ENCODE measurements at regions of chr17 and their contacts with region 1.

Region 1: DNA sequence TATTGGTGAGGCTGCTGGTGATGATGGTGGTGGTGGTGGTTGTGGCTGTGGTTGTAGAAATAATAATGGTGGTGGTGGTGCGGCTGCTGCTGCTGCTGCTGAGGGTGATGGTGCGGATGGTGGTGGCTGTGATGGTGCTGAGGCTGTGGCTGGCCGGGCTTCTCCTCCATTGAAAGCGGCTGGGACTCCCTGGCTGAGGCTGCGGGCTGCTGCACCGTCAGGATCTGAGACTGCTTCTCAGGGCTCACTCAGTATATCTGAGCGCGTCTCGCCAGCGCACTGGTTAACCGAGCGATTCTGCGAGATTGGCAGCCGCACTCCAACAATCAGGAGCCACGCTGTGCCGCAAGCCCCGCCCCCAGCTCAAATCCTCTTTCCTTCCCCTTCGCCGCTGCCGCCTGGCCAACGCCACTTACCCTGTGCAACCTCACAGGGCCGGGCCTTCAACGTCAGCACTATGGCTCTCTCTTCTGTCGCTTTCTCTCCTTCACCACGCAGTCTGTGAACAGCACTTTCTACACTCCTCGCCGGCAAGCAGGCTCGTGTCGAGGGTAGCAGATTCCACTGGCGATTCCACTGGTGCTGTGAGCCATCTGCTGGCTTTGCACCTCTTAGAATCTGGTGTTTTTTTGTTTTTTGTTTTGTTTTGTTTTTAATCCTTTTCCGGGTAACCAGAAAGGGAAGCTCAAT is at the start of gene NUFIP2:
- DNase-seq: peak; percentile 95
- ATAC-seq: peak; percentile 94
- H3K4me3 ChIP-seq: peak within 1 kb of the TSS; percentile 89
- H3K27ac ChIP-seq: peak within 1 kb of the TSS; percentile 97
- H3K4me1 ChIP-seq: peaks cover 2% of the 10 kb centered on the region; the same call in 1 of the 2 replicates
- H3K27me3 ChIP-seq: no peaks in the 10 kb centered on the region
- CTCF ChIP-seq: no peak
- EP300 ChIP-seq: peak in 1 of 2 experiments; percentile 86; a peak in 2 of 4 replicates
- POLR2A ChIP-seq: peak; percentile 98
- RAD21 ChIP-seq: peak; percentile 3; the same call in 1 of the 2 replicates
- polyA plus RNA-seq, gene NUFIP2: 4.3 to 5.2 TPM

Region 2: DNA sequence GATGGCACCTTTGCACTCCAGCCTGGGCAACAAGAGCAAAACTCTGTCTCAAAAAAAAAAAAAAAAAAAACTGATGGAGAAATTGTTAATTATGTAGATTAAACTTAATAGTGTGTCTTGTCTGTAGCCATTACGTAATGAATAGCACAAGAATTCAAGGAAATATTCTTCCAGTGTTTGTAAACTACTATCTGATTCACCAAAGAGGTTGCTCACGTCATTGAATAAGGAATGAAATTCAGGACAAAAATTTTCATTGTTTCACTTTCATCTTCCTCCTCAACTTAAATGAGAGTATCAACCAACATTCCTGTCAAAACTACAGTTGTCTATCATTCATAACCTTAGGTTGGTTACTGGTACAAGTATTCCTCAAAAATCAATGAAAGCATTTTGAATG is 83.2 kb before region 1 on chr17:
- CTCF ChIA-PET with region 1: no interaction called
- POLR2A ChIA-PET with region 1: no interaction called
- RAD21 ChIA-PET with region 1: no interaction called
- SMC1A ChIA-PET with region 1: no interaction called
- in situ Hi-C with region 1: no loop called
- intact Hi-C with region 1: no loop called
- DNase-seq: no peak
- ATAC-seq: no peak
- H3K4me3 ChIP-seq: no peak overlapping the region
- H3K27ac ChIP-seq: no peak overlapping the region
- H3K4me1 ChIP-seq: no peaks in the 10 kb centered on the region
- H3K27me3 ChIP-seq: no peaks in the 10 kb centered on the region
- CTCF ChIP-seq: no peak
- EP300 ChIP-seq: no peak
- POLR2A ChIP-seq: no peak
- RAD21 ChIP-seq: no peak

Region 3: DNA sequence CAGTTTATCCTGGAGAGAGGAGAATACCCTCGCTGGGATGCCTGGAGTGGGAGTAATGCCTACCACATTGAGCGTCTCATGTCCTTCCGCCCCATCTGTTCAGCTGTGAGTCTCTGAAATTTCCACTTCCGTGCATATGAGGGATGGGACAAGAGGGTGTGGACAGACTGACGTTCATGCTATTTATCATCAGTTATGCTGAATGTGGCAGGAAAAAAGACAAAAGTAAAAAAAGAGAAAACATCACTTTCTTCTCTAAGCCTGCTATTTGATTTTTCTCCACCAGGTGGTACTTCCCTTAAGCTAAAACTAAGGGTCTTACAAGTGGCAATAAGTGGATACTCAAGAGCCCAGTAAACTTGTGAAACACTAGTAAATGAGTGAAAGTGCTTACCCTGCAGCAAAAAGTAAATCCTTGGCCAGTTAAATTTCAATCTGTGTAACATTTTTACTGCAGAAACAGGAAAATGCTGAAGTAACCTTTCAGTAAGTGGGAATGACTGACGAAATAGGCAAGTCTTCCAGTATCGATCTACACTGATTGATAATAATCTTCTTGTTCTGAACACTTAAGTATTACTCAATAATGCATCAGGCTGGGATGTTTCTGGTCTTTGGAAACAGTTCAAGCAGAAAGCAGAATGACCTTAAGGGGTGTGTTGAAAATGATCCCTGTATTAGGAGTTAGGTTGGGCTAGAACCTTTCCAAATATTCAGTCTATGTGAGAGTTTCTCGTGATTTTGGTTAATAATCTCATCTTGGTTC is 41.8 kb before region 1 on chr17:
- CTCF ChIA-PET with region 1: interaction called, 36 read pairs
- POLR2A ChIA-PET with region 1: interaction called, 8 read pairs
- RAD21 ChIA-PET with region 1: interaction called, 4 read pairs
- SMC1A ChIA-PET with region 1: interaction called, 12 read pairs
- in situ Hi-C with region 1: no loop called
- intact Hi-C with region 1: no loop called
- DNase-seq: no peak
- ATAC-seq: peak; percentile 53
- H3K4me3 ChIP-seq: no peak overlapping the region
- H3K27ac ChIP-seq: no peak overlapping the region
- H3K4me1 ChIP-seq: no peaks in the 10 kb centered on the region
- H3K27me3 ChIP-seq: no peaks in the 10 kb centered on the region
- CTCF ChIP-seq: peak; percentile 19 to 47 (median 46); a peak in 4 of 6 replicates
- EP300 ChIP-seq: no peak
- POLR2A ChIP-seq: no peak
- RAD21 ChIP-seq: peak; percentile 30; the same call in 1 of the 2 replicates

Region 4: GRCh38 chr17:29273924-29274323 is 20.1 kb before region 1 on chr17:
- CTCF ChIA-PET with region 1: interaction called, 21 read pairs
- POLR2A ChIA-PET with region 1: no interaction called
- RAD21 ChIA-PET with region 1: interaction called, 3 read pairs
- SMC1A ChIA-PET with region 1: interaction called, 5 read pairs
- in situ Hi-C with region 1: no loop called
- intact Hi-C with region 1: no loop called
- DNase-seq: no peak
- ATAC-seq: no peak
- H3K4me3 ChIP-seq: no peak overlapping the region
- H3K27ac ChIP-seq: no peak overlapping the region
- H3K4me1 ChIP-seq: no peaks in the 10 kb centered on the region; the same call in 1 of the 2 replicates
- H3K27me3 ChIP-seq: no peaks in the 10 kb centered on the region
- CTCF ChIP-seq: no peak
- EP300 ChIP-seq: no peak
- POLR2A ChIP-seq: no peak
- RAD21 ChIP-seq: no peak

Region 5: DNA sequence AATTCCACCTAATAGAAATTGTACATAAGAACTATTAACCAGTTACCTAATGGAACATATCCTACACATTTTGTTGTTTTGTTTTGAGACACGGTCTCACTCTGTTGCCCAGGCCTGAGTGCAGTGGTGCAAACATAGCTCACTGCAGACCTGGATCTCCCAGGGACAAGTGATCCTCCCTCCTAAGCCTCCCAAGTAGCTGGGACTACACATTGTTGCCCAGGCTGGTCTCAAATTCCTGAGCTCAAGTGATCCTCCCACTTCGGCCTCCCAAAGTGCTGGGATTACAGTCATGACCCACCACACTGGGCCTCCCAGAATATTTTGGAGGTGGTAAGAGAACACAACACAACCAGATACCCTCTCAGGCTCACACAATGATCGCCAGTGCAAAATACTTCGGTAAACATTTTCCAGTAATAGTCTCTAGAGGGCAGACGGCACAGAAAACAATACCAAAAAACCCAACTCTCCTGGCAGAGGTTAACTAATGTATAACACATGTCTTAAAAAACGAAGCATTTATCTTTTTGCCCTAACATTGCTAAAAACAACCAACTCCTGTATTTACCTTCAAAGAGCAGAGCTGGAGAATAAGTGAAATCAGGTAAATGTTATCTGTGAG is 10.7 kb before region 1 on chr17:
- CTCF ChIA-PET with region 1: interaction called, 21 read pairs
- POLR2A ChIA-PET with region 1: interaction called, 8 read pairs
- RAD21 ChIA-PET with region 1: interaction called, 4 read pairs
- SMC1A ChIA-PET with region 1: interaction called, 6 read pairs
- in situ Hi-C with region 1: no loop called
- intact Hi-C with region 1: no loop called
- DNase-seq: no peak
- ATAC-seq: peak; percentile 53
- H3K4me3 ChIP-seq: 0 out of 2 replicates have a peak overlapping the region, but pooled peaks have one; percentile 22
- H3K27ac ChIP-seq: no peak overlapping the region
- H3K4me1 ChIP-seq: no peaks in the 10 kb centered on the region
- H3K27me3 ChIP-seq: no peaks in the 10 kb centered on the region
- CTCF ChIP-seq: no peak
- EP300 ChIP-seq: no peak
- POLR2A ChIP-seq: no peak
- RAD21 ChIP-seq: no peak

Region 6: DNA sequence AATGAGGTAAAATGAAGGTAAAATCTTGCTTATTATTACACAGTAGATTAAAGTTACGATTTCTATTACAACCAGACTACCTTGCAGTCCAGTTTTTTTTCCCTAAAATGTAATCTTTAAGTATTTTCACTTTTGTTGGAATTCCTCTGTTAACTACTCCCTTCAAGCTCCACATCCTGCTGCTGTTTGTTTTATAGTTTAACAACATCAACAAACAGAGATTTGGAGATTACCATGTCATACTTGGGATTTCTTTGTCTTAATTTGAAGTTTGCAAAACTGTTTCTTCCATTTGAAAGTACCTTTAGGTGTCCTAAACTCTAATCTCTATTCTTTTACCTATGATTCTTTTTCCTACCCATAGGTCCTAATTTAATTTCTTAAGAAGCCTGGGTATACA is 189.5 kb after region 1 on chr17:
- CTCF ChIA-PET with region 1: no interaction called
- POLR2A ChIA-PET with region 1: no interaction called
- RAD21 ChIA-PET with region 1: no interaction called
- SMC1A ChIA-PET with region 1: no interaction called
- in situ Hi-C with region 1: no loop called
- intact Hi-C with region 1: no loop called
- DNase-seq: no peak
- ATAC-seq: no peak
- H3K4me3 ChIP-seq: no peak overlapping the region
- H3K27ac ChIP-seq: no peak overlapping the region
- H3K4me1 ChIP-seq: no peaks in the 10 kb centered on the region
- H3K27me3 ChIP-seq: no peaks in the 10 kb centered on the region
- CTCF ChIP-seq: no peak
- EP300 ChIP-seq: no peak
- POLR2A ChIP-seq: no peak
- RAD21 ChIP-seq: no peak

Measured in GM12878 (cell line).